WTC11 (cell line): ENCODE measurements at regions of chr12 and their contacts with region 1.

Region 1: GRCh38 chr12:119036878-119037825 is 55.8 kb downstream of the SRRM4 start:
- DNase-seq: peak; percentile 57
- ATAC-seq: peak; percentile 72
- H3K4me3 Mint-ChIP-seq: no peak overlapping the region
- H3K27ac Mint-ChIP-seq: no peak overlapping the region
- H3K4me1 Mint-ChIP-seq: peaks cover 37% of the 10 kb centered on the region
- H3K27me3 Mint-ChIP-seq: no peaks in the 10 kb centered on the region
- CTCF ChIP-seq: peak; percentile 67

Region 2: GRCh38 chr12:118783703-118784102 is 253.4 kb before region 1 on chr12:
- CTCF ChIA-PET with region 1: no interaction called
- POLR2A ChIA-PET with region 1: no interaction called
- DNase-seq: no peak
- ATAC-seq: no peak
- H3K4me3 Mint-ChIP-seq: no peak overlapping the region
- H3K27ac Mint-ChIP-seq: no peak overlapping the region
- H3K4me1 Mint-ChIP-seq: peaks cover 16% of the 10 kb centered on the region
- H3K27me3 Mint-ChIP-seq: no peaks in the 10 kb centered on the region; the same call in 1 of the 2 replicates
- CTCF ChIP-seq: no peak

Region 3: DNA sequence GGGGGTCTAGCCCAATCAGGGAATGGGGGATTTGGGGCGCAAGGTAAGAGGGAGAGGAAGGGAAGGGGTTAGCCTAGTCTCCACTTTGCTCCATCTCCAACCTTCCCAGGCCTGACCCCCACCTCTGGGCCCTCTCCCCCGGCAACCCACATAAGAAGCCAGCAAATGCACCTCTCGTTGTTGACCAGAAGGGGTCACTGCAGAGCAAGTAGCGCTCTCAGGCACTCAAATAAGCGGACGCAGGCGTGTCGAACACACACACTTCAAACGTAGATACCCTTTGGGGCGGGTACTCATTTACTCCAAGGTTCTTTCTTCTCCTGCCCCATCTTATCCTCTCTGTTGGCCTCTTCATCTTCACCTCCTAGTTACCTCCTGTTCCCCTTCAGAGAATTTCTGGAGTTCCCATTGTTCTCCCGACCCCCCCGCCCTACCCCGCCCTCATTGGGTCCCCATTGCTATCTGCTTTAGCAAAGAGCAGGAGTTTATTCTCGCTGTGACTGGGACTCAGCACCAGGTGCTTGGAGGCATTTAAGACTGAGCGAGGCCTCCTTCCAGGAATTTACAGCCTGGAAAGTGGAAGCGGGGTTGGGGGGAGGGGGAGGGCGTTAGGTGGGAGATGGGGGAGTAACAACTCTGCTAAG is 57.3 kb before region 1 on chr12:
- CTCF ChIA-PET with region 1: interaction called, 11 read pairs
- POLR2A ChIA-PET with region 1: no interaction called
- DNase-seq: peak; percentile 77
- ATAC-seq: peak; percentile 60
- H3K4me3 Mint-ChIP-seq: peak overlapping the region; percentile 78
- H3K27ac Mint-ChIP-seq: no peak overlapping the region
- H3K4me1 Mint-ChIP-seq: peaks cover 13% of the 10 kb centered on the region
- H3K27me3 Mint-ChIP-seq: peaks cover 30% of the 10 kb centered on the region
- CTCF ChIP-seq: peak; percentile 72

Region 4: DNA sequence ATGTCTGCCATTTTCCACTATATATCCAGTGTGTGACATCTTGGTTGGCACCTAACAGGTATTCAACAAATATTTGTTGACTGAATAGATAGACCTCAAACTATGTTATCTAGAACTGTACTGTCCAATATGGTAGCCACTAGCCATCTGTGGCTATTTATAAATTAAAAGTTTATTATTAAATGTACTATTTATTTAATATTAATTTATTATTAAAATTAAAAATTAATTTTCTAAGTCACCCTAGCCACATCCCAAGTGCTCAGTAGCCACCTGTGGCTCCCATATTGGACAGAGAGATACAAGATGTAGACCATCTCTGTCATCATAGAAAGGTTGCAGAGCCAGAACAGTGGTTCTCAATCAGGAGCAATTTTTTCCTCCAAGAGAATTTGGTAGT is 13.5 kb after region 1 on chr12:
- CTCF ChIA-PET with region 1: interaction called, 10 read pairs
- POLR2A ChIA-PET with region 1: no interaction called
- DNase-seq: no peak
- ATAC-seq: no peak
- H3K4me3 Mint-ChIP-seq: no peak overlapping the region
- H3K27ac Mint-ChIP-seq: no peak overlapping the region
- H3K4me1 Mint-ChIP-seq: no peaks in the 10 kb centered on the region
- H3K27me3 Mint-ChIP-seq: 0 out of 2 replicates have a peak, but pooled peaks cover 4% of the 10 kb centered on the region
- CTCF ChIP-seq: no peak

Region 5: GRCh38 chr12:119069147-119069642 is 32.0 kb after region 1 on chr12:
- CTCF ChIA-PET with region 1: interaction called, 12 read pairs
- POLR2A ChIA-PET with region 1: no interaction called
- DNase-seq: no peak
- ATAC-seq: peak; percentile 36; the same call in 1 of the 2 replicates
- H3K4me3 Mint-ChIP-seq: no peak overlapping the region
- H3K27ac Mint-ChIP-seq: no peak overlapping the region
- H3K4me1 Mint-ChIP-seq: peaks cover 23% of the 10 kb centered on the region
- H3K27me3 Mint-ChIP-seq: peaks cover 25% of the 10 kb centered on the region
- CTCF ChIP-seq: no peak

Region 6: DNA sequence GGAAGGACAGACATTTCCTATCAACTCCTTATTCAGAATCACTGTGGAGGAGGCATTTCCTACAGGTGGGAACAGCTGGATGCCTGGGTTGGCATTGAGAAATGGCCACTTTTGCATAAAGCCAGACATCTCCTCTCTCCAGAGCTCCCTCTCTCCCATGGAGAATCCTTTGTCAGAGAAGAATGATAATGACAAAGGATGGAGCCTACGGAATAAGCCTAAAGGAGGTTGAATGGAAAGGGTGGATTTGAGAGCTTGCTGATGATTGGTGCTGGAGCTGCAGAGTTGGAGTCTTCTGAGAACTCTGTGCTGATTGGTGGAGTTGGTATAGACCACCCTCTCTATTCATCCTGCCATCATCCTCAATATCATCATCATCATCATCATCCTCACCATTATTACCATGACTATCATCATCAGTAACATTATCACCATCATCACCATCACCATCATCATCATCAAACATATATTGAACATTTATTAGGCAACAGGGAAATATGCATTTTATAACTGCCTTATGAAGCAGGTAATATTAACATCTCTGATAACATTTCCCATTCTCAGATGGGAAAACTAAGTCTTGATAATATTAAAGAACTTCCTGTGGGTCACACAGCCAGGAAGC is 52.3 kb after region 1 on chr12:
- CTCF ChIA-PET with region 1: interaction called, 17 read pairs
- POLR2A ChIA-PET with region 1: no interaction called
- DNase-seq: peak; percentile 26
- ATAC-seq: peak; percentile 92
- H3K4me3 Mint-ChIP-seq: no peak overlapping the region
- H3K27ac Mint-ChIP-seq: peak overlapping the region; percentile 93
- H3K4me1 Mint-ChIP-seq: peaks cover 59% of the 10 kb centered on the region
- H3K27me3 Mint-ChIP-seq: peaks cover 3% of the 10 kb centered on the region
- CTCF ChIP-seq: no peak